ENCODE measurements at regions of chr2 and their contacts with region 1.

Region 1: GRCh38 chr2:207143215-207144172 is 22.3 kb downstream of the KLF7 start:
- DNase-seq: peak; percentile 46
- H3K4me3 Mint-ChIP-seq: peak overlapping the region; percentile 61
- H3K27ac Mint-ChIP-seq: peak overlapping the region; percentile 90
- H3K4me1 Mint-ChIP-seq: peaks cover 59% of the 10 kb centered on the region
- H3K27me3 Mint-ChIP-seq: peaks cover 6% of the 10 kb centered on the region

Region 2: DNA sequence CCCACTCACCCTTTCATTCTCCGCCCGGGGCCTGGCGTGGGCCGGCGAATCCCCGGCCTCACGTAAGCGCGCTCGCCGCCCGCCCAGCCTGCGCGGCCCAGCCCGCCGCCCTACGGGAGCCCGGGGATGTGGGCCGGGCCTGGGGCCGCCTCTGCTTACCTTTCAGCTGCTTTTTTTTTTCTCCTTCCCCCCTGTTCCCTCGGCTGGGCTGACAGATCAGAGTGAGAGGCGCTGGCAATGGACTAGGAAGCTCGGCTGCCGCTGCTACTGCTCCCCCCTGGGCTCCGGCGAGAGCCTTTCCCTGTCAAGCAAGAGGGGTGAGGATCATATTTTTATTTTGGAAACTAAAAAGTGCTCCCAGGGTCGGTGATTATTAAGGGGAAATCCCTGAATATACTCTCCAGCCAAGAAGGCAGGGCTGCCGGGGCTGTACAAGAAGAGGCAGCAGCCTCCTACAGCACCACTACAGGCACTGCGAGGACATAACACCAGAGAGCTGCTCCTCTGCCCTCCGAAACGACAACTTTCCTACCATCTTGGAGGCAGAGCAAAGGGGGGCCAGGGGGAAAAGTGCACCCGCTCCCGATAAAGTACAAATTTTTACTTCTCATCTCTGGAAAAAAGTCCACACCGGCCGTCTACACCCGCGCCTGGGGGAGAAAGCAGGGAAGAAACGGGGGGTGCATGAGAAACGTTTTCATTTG is 1057.6 kb before region 1 on chr2 and contains the start of gene INO80D:
- intact Hi-C with region 1: loop called (anchors 10 kb)
- DNase-seq: peak; percentile 72
- H3K4me3 Mint-ChIP-seq: peak within 1 kb of the TSS; percentile 99
- H3K27ac Mint-ChIP-seq: peak within 1 kb of the TSS; percentile 99
- H3K4me1 Mint-ChIP-seq: peaks cover 30% of the 10 kb centered on the region
- H3K27me3 Mint-ChIP-seq: peaks cover 2% of the 10 kb centered on the region
- total RNA-seq, gene INO80D: 29.4 and 30.3 TPM in 2 replicates

Region 3: GRCh38 chr2:206981739-206982340 is 161.7 kb before region 1 on chr2:
- intact Hi-C with region 1: loop called (anchors 5 kb)
- DNase-seq: peak; percentile 9
- H3K4me3 Mint-ChIP-seq: no peak overlapping the region
- H3K27ac Mint-ChIP-seq: no peak overlapping the region
- H3K4me1 Mint-ChIP-seq: peaks cover 13% of the 10 kb centered on the region
- H3K27me3 Mint-ChIP-seq: no peaks in the 10 kb centered on the region

Region 4: DNA sequence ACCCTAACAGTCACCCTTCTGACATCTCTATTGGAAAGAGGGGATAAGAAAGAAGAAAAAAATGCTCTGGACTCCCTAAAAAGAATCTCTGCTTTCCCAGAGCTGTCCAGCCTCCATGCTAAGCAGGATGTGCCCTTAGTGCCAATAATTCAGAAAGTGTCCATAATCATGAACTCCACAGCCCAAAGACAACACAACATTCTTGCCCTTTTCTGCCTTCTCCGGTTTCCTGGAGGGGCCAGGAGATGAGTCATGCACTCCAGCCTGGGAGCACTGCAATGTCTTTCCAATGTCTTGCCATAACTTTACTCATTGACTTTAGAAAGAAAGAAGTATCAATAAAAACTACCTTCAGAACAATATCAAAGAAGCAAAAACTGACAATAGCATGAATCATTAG is 21.7 kb before region 1 on chr2:
- intact Hi-C with region 1: loop called (anchors 2 kb)
- DNase-seq: no peak
- H3K4me3 Mint-ChIP-seq: no peak overlapping the region
- H3K27ac Mint-ChIP-seq: no peak overlapping the region
- H3K4me1 Mint-ChIP-seq: peaks cover 46% of the 10 kb centered on the region
- H3K27me3 Mint-ChIP-seq: no peaks in the 10 kb centered on the region

Region 5: GRCh38 chr2:207156451-207157161 is 13.1 kb after region 1 on chr2:
- intact Hi-C with region 1: loop called (anchors 1 kb)
- DNase-seq: peak; percentile 19
- H3K4me3 Mint-ChIP-seq: peak overlapping the region; percentile 0
- H3K27ac Mint-ChIP-seq: peak overlapping the region; percentile 41
- H3K4me1 Mint-ChIP-seq: peaks cover 75% of the 10 kb centered on the region
- H3K27me3 Mint-ChIP-seq: peaks cover 3% of the 10 kb centered on the region